AG04450 (cell line): ENCODE measurements at regions of chr10 and their contacts with region 1.

Region 1: GRCh38 chr10:71893920-71894319 is 42.9 kb upstream of the PSAP start:
- DNase-seq: no peak
- H3K4me3 ChIP-seq: no peak overlapping the region
- H3K27ac ChIP-seq: no peak overlapping the region
- H3K27me3 ChIP-seq: peaks cover 5% of the 10 kb centered on the region
- CTCF ChIP-seq: no peak

Region 2: GRCh38 chr10:71597821-71598498 is 296.0 kb before region 1 on chr10:
- CTCF ChIA-PET with region 1: no interaction called
- POLR2A ChIA-PET with region 1: no interaction called
- DNase-seq: no peak
- H3K4me3 ChIP-seq: no peak overlapping the region
- H3K27ac ChIP-seq: no peak overlapping the region
- H3K27me3 ChIP-seq: no peaks in the 10 kb centered on the region
- CTCF ChIP-seq: no peak

Region 3: GRCh38 chr10:71613261-71613777 is 280.6 kb before region 1 on chr10:
- CTCF ChIA-PET with region 1: no interaction called
- POLR2A ChIA-PET with region 1: no interaction called
- DNase-seq: no peak
- H3K4me3 ChIP-seq: no peak overlapping the region
- H3K27ac ChIP-seq: no peak overlapping the region
- H3K27me3 ChIP-seq: peaks cover 38% of the 10 kb centered on the region
- CTCF ChIP-seq: no peak

Region 4: GRCh38 chr10:71822448-71822763 is 71.5 kb before region 1 on chr10:
- CTCF ChIA-PET with region 1: interaction called, 10 read pairs
- POLR2A ChIA-PET with region 1: interaction called, 3 read pairs
- DNase-seq: no peak
- H3K4me3 ChIP-seq: no peak overlapping the region
- H3K27ac ChIP-seq: no peak overlapping the region
- H3K27me3 ChIP-seq: no peaks in the 10 kb centered on the region
- CTCF ChIP-seq: no peak

Region 5: DNA sequence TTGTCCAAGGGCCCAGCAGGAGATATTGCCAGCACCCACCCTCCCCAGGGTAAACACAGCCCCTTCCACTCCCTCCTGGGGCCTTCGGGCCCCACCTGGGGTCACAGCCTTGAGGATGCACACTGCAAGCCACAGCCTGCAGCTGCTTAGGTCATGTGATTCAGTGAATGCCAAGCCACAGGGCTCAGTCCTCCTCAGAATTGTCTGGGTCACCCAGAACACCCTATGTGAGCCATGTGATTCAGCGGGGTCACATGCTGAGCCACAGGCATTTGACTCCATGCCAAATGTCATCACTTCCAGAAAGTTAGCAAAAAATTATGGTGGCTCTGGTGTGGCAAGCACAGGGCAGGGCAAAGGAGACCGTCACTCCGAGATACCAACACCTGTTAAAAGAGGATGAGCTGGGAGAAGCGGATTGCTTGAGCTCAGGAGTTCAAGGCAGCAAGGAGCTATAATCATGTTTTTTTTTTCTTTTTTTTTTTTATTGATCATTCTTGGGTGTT is 25.7 kb before region 1 on chr10:
- CTCF ChIA-PET with region 1: interaction called, 12 read pairs
- POLR2A ChIA-PET with region 1: no interaction called
- DNase-seq: no peak
- H3K4me3 ChIP-seq: no peak overlapping the region
- H3K27ac ChIP-seq: no peak overlapping the region
- H3K27me3 ChIP-seq: peaks cover under 1% of the 10 kb centered on the region
- CTCF ChIP-seq: no peak

Region 6: GRCh38 chr10:71957546-71958275 is 63.8 kb after region 1 on chr10:
- CTCF ChIA-PET with region 1: interaction called, 13 read pairs
- POLR2A ChIA-PET with region 1: no interaction called
- DNase-seq: no peak
- H3K4me3 ChIP-seq: no peak overlapping the region
- H3K27ac ChIP-seq: no peak overlapping the region
- H3K27me3 ChIP-seq: no peaks in the 10 kb centered on the region
- CTCF ChIP-seq: peak; percentile 19; the same call in 1 of the 2 replicates

Region 7: DNA sequence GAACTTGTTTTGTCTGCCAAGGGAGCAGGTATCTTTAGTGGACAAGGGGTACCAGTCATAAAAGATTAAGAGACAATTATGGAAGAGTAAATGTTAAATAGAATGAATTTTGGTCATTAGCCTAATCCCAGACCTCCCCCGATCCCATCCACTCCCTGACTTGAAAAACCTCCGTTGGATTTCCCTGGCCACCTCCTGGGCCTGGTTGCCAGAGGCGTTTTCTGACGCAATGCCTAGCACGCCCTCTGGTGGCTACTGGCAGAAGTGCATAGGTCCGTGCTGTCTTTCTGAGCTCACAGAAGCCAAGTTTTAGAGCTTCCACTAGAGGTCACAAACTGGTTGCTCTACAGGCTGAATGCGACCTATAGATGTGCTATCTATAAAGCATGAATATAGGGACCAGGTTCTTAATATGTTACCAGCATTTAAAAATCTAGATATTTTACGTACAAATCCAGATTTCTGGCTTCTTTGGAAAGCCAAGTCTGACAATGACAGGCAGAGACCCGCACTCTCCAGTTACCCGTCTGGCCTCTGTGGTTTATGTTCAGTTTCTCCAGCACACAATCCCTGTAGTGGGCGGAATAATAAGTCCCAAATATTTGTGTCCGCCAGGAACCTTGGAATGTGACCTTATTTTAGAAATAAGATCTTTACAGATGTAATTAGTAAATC is 154.7 kb after region 1 on chr10:
- CTCF ChIA-PET with region 1: interaction called, 168 read pairs
- POLR2A ChIA-PET with region 1: no interaction called
- DNase-seq: peak; percentile 83
- H3K4me3 ChIP-seq: no peak overlapping the region
- H3K27ac ChIP-seq: no peak overlapping the region
- H3K27me3 ChIP-seq: peaks cover 4% of the 10 kb centered on the region
- CTCF ChIP-seq: peak; percentile 100

Region 8: GRCh38 chr10:72229261-72230251 is 335.6 kb after region 1 on chr10:
- CTCF ChIA-PET with region 1: interaction called, 13 read pairs
- POLR2A ChIA-PET with region 1: no interaction called
- DNase-seq: no peak
- H3K4me3 ChIP-seq: no peak overlapping the region
- H3K27ac ChIP-seq: no peak overlapping the region
- H3K27me3 ChIP-seq: no peaks in the 10 kb centered on the region
- CTCF ChIP-seq: no peak

Region 9: GRCh38 chr10:72511459-72511858 is 617.5 kb after region 1 on chr10:
- CTCF ChIA-PET with region 1: no interaction called
- POLR2A ChIA-PET with region 1: no interaction called
- DNase-seq: no peak
- H3K4me3 ChIP-seq: no peak overlapping the region
- H3K27ac ChIP-seq: no peak overlapping the region
- H3K27me3 ChIP-seq: no peaks in the 10 kb centered on the region
- CTCF ChIP-seq: no peak